Activated CD4-positive, alpha-beta memory T cell treated with anti-CD3 and anti-CD28 coated beads, Interleukin-2, amount 10 ng/mL, durations not matched to agents 7 days and 5 days (primary cell): ENCODE measurements at regions of chr19 and their contacts with region 1.

Region 1: DNA sequence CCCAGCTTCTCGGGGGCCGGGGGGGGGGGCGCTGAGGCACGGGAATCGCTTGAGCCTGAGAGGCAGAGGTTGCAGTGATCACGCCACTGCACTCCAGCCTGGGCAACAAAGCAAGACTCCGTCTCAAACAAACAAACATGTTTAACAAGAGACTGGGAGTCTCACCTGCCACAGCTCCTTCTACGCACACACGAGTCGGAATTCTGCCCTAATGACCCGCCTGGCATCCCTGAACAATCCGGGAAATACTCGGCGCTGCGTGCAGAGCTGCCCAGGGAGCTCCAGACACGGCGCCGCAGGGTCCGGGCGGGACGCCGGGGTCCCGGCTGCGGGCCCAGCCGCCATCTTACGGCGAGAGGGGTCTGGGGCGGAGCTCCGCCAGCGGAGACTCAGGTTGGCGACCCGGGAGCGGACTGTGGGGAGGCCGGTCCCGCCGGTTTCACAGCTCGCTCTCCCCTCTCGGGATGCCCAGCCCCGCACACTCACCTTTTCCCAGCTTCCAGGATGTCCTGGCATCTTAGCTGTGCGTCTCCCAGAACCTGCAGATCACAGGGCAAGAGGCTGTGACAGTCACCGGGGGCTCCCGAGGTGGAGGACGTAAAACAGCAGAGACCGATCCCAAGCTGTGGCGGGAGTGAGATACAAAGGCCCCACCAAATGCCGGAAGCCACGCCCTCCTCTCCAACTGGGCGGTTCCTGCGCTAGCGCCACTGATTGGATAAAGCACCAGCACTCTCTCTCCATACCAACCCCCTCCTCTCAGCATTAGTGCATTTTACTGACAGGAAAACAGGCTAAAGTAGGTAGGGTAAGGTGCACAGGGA is 23.6 kb upstream of the ZNF724 start:
- DNase-seq: peak; percentile 92
- H3K4me3 Mint-ChIP-seq: peak overlapping the region; percentile 96
- H3K27ac Mint-ChIP-seq: peak overlapping the region; percentile 92
- H3K4me1 Mint-ChIP-seq: peaks cover 21% of the 10 kb centered on the region
- H3K27me3 Mint-ChIP-seq: no peaks in the 10 kb centered on the region

Region 2: DNA sequence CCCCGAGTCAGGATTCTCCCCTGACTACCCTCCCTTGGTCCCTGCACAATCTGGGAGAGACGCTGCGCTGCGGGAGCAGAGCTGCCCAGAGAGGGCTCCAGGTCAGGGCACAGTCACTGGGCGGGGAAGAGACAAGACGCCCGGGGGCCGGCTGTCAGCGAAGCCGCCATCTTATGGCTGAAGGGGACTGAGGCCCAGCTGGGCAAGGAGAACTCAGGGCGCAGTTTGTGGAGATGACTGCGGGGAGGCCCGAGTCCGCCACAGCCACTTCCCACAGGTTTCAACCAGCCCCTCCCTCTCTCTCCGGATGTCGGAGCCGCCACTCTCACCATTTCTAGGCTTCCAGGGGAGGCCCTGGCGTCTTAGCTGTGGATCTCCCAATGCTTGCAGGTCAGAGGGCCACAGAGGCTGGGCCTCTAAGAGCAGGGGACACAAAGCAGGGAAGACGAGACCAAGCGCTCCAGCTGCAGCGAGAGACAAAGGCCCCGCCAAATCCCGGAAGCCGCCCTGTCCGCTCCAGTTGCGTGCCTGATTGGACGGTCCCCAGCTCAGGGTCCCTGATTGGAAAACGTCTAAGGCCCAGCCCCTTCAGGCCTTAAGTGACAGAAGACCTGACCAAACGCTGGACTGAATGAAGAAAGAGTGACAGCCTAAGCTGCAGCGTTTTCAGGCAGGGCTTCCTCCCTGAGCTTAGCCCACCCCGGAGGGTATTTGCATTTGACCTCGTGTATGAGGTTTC is 23.7 kb before region 1 on chr19 and contains the start of gene ZNF724:
- CTCF ChIA-PET with region 1: interaction called, 5 read pairs
- POLR2A ChIA-PET with region 1: interaction called, 43 read pairs
- DNase-seq: peak; percentile 92
- H3K4me3 Mint-ChIP-seq: peak within 1 kb of the TSS; percentile 96
- H3K27ac Mint-ChIP-seq: peak within 1 kb of the TSS; percentile 97
- H3K4me1 Mint-ChIP-seq: peaks cover 16% of the 10 kb centered on the region
- H3K27me3 Mint-ChIP-seq: no peaks in the 10 kb centered on the region
- total RNA-seq, gene ZNF724: 10.5 to 10.9 TPM

Region 3: DNA sequence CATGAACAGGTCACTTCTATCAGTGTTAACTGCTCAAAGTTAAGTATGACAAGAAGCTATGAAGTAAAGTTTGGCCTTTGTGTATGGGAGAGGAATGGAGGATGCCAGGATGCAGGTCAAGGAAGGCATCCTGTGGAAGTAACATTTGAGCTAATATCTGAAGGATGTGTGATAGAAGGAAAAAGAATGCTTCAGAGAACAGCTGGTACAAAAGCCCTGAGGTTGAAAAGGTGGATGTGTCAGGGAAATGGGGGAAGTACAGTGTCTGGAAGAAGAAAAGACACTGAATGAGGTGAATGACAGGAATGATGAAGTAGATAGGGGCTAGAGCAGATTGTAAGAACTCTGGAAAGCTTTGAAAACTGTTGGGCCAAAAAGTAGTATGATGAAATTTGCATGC is 54.4 kb after region 1 on chr19:
- CTCF ChIA-PET with region 1: no interaction called
- POLR2A ChIA-PET with region 1: no interaction called
- DNase-seq: no peak
- H3K4me3 Mint-ChIP-seq: no peak overlapping the region
- H3K27ac Mint-ChIP-seq: no peak overlapping the region
- H3K4me1 Mint-ChIP-seq: no peaks in the 10 kb centered on the region
- H3K27me3 Mint-ChIP-seq: no peaks in the 10 kb centered on the region

Region 4: DNA sequence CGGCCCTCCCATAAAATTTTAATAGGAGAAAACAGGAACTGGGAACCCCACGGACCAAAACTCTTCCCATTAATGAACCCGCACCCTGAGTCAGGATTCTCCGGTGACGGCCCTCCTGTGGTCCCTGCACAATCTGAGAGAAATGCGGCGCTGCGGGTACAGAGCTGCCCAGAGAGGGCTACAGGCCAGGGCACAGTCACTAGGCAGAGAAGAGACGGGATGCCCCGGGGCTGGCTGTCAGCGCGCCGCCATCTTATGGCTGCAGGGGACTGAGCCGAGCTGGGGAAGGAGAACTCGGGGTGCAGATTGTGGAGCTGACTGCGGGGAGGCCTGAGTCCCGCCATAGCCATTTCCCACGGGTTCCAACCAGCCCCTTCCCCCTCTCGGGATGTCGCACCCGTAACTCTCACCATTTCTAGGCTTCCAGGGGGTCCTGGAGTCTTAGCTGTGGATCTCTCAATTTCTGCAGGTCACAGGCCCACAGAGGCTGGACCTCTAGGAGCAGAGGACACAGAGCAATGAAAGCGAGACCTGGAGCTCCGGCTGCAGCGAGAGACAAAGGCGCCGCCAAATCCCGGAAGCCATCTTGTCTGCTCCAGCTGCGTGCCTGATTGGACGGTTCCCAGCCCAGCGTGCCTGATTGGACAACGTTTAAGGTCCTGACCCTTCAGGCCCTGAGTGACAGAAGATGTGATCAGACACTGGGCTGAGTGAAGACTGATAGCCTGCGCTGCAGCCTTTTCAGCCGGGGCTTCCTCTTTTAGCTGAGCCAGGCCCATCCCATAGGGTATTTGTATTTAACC is 413.0 kb after region 1 on chr19 and contains the start of gene ZNF675:
- CTCF ChIA-PET with region 1: no interaction called
- POLR2A ChIA-PET with region 1: interaction called, 15 read pairs
- DNase-seq: peak; percentile 91
- H3K4me3 Mint-ChIP-seq: peak within 1 kb of the TSS; percentile 98
- H3K27ac Mint-ChIP-seq: peak within 1 kb of the TSS; percentile 96
- H3K4me1 Mint-ChIP-seq: peaks cover 18% of the 10 kb centered on the region
- H3K27me3 Mint-ChIP-seq: no peaks in the 10 kb centered on the region
- total RNA-seq, gene ZNF675: 18.1 to 19.9 TPM